A673 (cell line): ENCODE measurements at regions of chr7 and their contacts with region 1.

Region 1: GRCh38 chr7:151315038-151315655 is 26.5 kb upstream of the NUB1 start:
- DNase-seq: peak; percentile 80
- H3K4me3 ChIP-seq: no peak overlapping the region
- H3K27ac ChIP-seq: no peak overlapping the region
- H3K4me1 ChIP-seq: no peaks in the 10 kb centered on the region
- H3K27me3 ChIP-seq: no peaks in the 10 kb centered on the region
- CTCF ChIP-seq: peak; percentile 82

Region 2: GRCh38 chr7:150962553-150963399 is 352.4 kb before region 1 on chr7:
- CTCF ChIA-PET with region 1: no interaction called
- POLR2A ChIA-PET with region 1: no interaction called
- intact Hi-C with region 1: no loop called
- DNase-seq: peak; percentile 68
- H3K4me3 ChIP-seq: no peak overlapping the region
- H3K27ac ChIP-seq: no peak overlapping the region
- H3K4me1 ChIP-seq: peaks cover 8% of the 10 kb centered on the region
- H3K27me3 ChIP-seq: peaks cover 9% of the 10 kb centered on the region
- CTCF ChIP-seq: peak; percentile 95

Region 3: GRCh38 chr7:151351027-151351426 is 35.9 kb after region 1 on chr7:
- CTCF ChIA-PET with region 1: no interaction called
- POLR2A ChIA-PET with region 1: no interaction called
- intact Hi-C with region 1: loop called (anchors 1 kb)
- DNase-seq: peak; percentile 14
- H3K4me3 ChIP-seq: no peak overlapping the region
- H3K27ac ChIP-seq: no peak overlapping the region
- H3K4me1 ChIP-seq: no peaks in the 10 kb centered on the region
- H3K27me3 ChIP-seq: no peaks in the 10 kb centered on the region
- CTCF ChIP-seq: no peak; the same call in 1 of the 2 replicates

Region 4: GRCh38 chr7:151448261-151449252 is 133.4 kb after region 1 on chr7:
- CTCF ChIA-PET with region 1: no interaction called
- POLR2A ChIA-PET with region 1: no interaction called
- intact Hi-C with region 1: loop called (anchors 5 kb)
- DNase-seq: peak; percentile 77
- H3K4me3 ChIP-seq: peak overlapping the region; percentile 58
- H3K27ac ChIP-seq: peak overlapping the region; percentile 67
- H3K4me1 ChIP-seq: peaks cover 4% of the 10 kb centered on the region
- H3K27me3 ChIP-seq: no peaks in the 10 kb centered on the region
- CTCF ChIP-seq: peak; percentile 84

Region 5: GRCh38 chr7:151599401-151600227 is 284.5 kb after region 1 on chr7:
- CTCF ChIA-PET with region 1: no interaction called
- POLR2A ChIA-PET with region 1: no interaction called
- intact Hi-C with region 1: no loop called
- DNase-seq: no peak
- H3K4me3 ChIP-seq: no peak overlapping the region
- H3K27ac ChIP-seq: no peak overlapping the region
- H3K4me1 ChIP-seq: no peaks in the 10 kb centered on the region
- H3K27me3 ChIP-seq: no peaks in the 10 kb centered on the region
- CTCF ChIP-seq: no peak